ENCODE measurements at regions of chr6 and their contacts with region 1.

Region 1: DNA sequence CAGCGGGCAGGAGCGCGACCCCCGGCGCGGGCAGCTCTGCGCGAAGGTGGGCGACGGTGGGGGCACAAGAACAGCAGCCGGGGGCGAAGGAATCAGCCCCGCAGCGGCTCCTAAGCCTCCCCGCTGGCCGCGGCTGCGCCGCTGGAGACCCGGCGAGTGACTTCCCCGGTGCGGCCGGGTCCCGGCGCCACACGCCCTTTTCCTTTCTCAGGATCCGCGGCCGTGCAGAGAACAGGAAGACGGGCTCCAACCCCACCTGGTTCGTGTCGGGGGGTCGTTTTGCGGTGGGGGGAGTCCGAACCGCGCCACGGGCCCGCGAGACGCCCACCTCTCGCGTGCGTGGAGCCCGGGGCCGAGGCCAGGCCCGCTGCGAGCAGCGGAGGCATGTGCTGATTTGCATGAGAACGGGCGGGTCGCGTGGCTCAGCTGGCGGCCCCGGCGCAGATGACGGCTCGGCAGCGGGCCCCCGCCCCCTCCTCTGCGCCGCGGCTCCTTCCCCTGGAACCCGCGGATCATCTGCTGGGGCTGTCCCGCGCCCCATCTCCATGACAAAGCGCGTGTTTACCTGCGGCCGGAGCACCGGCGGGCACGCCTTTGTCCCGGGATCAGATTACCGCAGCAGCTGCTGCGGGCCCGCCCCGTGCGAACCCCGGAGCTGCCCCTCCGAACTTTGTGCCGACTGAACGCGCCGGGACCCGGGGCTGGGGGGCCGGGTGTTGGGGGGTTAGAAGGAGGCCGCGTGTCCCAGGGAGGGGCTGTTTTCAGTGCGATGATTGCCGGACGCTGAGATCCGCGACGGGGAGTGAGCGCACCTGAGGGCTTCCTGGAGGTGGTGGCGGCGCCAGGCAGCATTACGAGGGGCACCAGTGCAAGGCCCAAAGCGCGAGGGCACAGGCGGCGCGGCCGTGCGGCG is 4.9 kb upstream of the DLL1 start:
- DNase-seq: peak; percentile 80
- ATAC-seq: peak; percentile 67
- H3K4me3 Mint-ChIP-seq: peak overlapping the region; percentile 52
- H3K27ac Mint-ChIP-seq: no peak overlapping the region
- H3K4me1 Mint-ChIP-seq: peaks cover 29% of the 10 kb centered on the region
- H3K27me3 Mint-ChIP-seq: peaks cover 61% of the 10 kb centered on the region

Region 2: DNA sequence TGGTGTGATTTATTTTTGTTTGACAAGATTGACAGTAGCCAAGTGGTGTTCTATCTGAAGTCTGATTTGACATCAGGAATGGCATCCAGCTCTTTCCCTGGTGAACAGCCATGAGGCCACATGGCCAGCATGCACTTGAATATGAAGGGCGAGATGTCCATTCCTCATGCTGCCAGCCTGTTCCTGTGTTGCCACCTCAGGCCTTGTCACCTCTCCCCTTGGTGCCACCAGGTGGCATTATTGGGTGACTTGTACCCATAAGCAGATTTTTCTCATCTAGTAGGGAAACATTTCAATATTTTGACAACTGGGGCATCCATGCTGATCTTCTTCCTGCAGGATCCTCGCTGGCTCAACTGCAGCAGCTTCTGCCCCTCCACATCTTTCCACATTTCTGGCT is 345.2 kb before region 1 on chr6:
- CTCF ChIA-PET with region 1: no interaction called
- POLR2A ChIA-PET with region 1: no interaction called
- intact Hi-C with region 1: loop called (anchors 2 to 5 kb)
- DNase-seq: peak; percentile 62
- ATAC-seq: peak; percentile 63
- H3K4me3 Mint-ChIP-seq: no peak overlapping the region
- H3K27ac Mint-ChIP-seq: no peak overlapping the region
- H3K4me1 Mint-ChIP-seq: no peaks in the 10 kb centered on the region
- H3K27me3 Mint-ChIP-seq: no peaks in the 10 kb centered on the region

Region 3: GRCh38 chr6:169990095-169991030 is 305.4 kb before region 1 on chr6:
- CTCF ChIA-PET with region 1: no interaction called
- POLR2A ChIA-PET with region 1: no interaction called
- intact Hi-C with region 1: loop called in 1 of 2 experiments (anchors 5 kb)
- DNase-seq: peak; percentile 88
- ATAC-seq: peak; percentile 92
- H3K4me3 Mint-ChIP-seq: peak overlapping the region; percentile 58
- H3K27ac Mint-ChIP-seq: peak overlapping the region; percentile 91
- H3K4me1 Mint-ChIP-seq: peaks cover 33% of the 10 kb centered on the region
- H3K27me3 Mint-ChIP-seq: no peaks in the 10 kb centered on the region

Region 4: DNA sequence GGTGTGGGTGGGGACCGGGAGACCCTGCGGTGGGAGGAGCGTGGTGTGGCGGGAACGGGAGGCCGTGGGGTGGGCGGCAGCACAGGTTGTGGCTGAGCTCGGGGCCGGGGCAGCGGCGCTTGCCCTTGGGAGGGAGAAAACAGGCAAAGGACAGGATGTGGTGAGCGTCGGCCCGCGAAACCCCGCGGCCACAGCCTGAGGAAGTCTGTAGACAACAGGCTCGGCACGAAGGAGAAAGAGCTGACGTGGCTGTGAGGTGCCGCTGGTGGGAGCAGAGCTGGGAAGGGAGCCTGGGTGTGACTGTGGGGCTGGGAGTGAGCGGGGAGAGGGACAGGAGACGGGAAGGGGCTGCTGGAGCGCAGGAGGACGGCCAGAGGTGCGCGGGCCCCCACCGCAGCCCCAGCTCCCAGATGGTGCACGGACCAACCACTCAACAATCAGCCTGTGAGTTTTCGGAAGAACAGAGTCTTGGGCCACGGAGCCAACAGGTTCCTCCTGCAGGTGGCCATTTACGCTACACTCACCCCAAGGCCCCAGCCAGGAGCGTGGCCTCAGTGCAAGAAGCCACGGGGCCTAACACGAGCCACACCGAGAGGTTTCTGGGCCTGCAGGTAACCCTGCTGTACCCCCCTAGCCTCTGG is 207.7 kb before region 1 on chr6:
- CTCF ChIA-PET with region 1: no interaction called
- POLR2A ChIA-PET with region 1: no interaction called
- intact Hi-C with region 1: loop called in 1 of 2 experiments (anchors 5 kb)
- DNase-seq: peak; percentile 71
- ATAC-seq: peak; percentile 67
- H3K4me3 Mint-ChIP-seq: peak overlapping the region; percentile 70
- H3K27ac Mint-ChIP-seq: peak overlapping the region; percentile 88
- H3K4me1 Mint-ChIP-seq: peaks cover 28% of the 10 kb centered on the region
- H3K27me3 Mint-ChIP-seq: no peaks in the 10 kb centered on the region

Region 5: GRCh38 chr6:170271771-170272314 is 23.9 kb before region 1 on chr6:
- CTCF ChIA-PET with region 1: interaction called, 4 read pairs
- POLR2A ChIA-PET with region 1: no interaction called
- intact Hi-C with region 1: loop called in 1 of 2 experiments (anchors 1 kb)
- DNase-seq: peak; percentile 88
- ATAC-seq: peak; percentile 95
- H3K4me3 Mint-ChIP-seq: peak overlapping the region; percentile 66
- H3K27ac Mint-ChIP-seq: peak overlapping the region; percentile 83
- H3K4me1 Mint-ChIP-seq: peaks cover 14% of the 10 kb centered on the region
- H3K27me3 Mint-ChIP-seq: peaks cover 3% of the 10 kb centered on the region

Region 6: GRCh38 chr6:170516783-170517616 is 221.2 kb after region 1 on chr6:
- CTCF ChIA-PET with region 1: no interaction called
- POLR2A ChIA-PET with region 1: no interaction called
- intact Hi-C with region 1: loop called in 1 of 2 experiments (anchors 5 kb)
- DNase-seq: peak; percentile 59
- ATAC-seq: peak; percentile 97
- H3K4me3 Mint-ChIP-seq: no peak overlapping the region
- H3K27ac Mint-ChIP-seq: no peak overlapping the region
- H3K4me1 Mint-ChIP-seq: no peaks in the 10 kb centered on the region
- H3K27me3 Mint-ChIP-seq: peaks cover 33% of the 10 kb centered on the region

Measured in activated CD4-positive, alpha-beta T cell treated with anti-CD3 and anti-CD28 coated beads for 36 hours (primary cell).